ENCODE measurements at regions of chr6 and their contacts with region 1.

Region 1: GRCh38 chr6:88989215-88989614 is 25.8 kb upstream of the RNGTT start:
- DNase-seq: no peak
- ATAC-seq: no peak
- H3K4me3 ChIP-seq: no peak overlapping the region
- H3K27ac ChIP-seq: no peak overlapping the region
- H3K4me1 ChIP-seq: peaks cover 0 to 10% (median 0%) of the 10 kb centered on the region in 9 donors
- H3K27me3 ChIP-seq: no peaks in the 10 kb centered on the region
- CTCF ChIP-seq: no peak

Region 2: DNA sequence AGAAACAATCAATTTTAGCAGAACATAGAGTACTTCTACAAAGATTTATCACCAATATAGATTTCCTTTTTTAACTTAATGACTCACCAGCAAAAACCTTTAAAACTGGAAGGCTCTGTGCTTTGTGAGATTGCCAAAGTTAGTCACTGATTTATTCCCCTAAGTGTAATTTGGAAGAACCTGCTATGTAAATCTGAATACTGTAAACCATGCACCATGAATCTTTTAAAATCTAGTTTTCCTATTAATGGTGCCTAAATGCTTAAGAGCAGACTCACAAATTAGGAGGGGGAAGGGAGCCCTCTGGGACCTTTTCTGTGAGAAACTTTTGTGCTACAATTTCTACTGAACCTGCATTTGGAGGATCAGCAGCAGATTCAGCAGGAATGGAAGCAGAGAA is 33.6 kb after region 1 on chr6:
- intact Hi-C with region 1: loop called in 1 of 10 experiments (anchors 5 kb)
- DNase-seq: no peak
- ATAC-seq: peak in 5 of 8 donors; percentile 8 to 46 (median 26)
- H3K4me3 ChIP-seq: no peak overlapping the region
- H3K27ac ChIP-seq: peak overlapping the region in 6 of 10 donors; percentile 3 to 84 (median 70)
- H3K4me1 ChIP-seq: peaks cover 3 to 34% (median 30%) of the 10 kb centered on the region in 9 donors
- H3K27me3 ChIP-seq: no peaks in the 10 kb centered on the region
- CTCF ChIP-seq: no peak

Measured in heart right ventricle (tissue), 16 donors.